SK-N-SH (cell line): ENCODE measurements at regions of chr3 and their contacts with region 1.

Region 1: GRCh38 chr3:151227807-151228665 is 25.0 kb upstream of the GPR171 start:
- DNase-seq: peak; percentile 70
- H3K4me3 ChIP-seq: no peak overlapping the region; a peak in 1 of 4 replicates
- H3K27ac ChIP-seq: peak overlapping the region in 1 of 2 experiments; percentile 33; a peak in 1 of 4 replicates
- H3K4me1 ChIP-seq: peaks cover 0 to 3% of the 10 kb centered on the region in 2 experiments; a peak in 2 of 4 replicates
- H3K27me3 ChIP-seq: no peaks in the 10 kb centered on the region
- CTCF ChIP-seq: peak; percentile 96
- EP300 ChIP-seq: no peak
- RAD21 ChIP-seq: peak; percentile 93

Region 2: GRCh38 chr3:151168269-151169094 is 59.6 kb before region 1 on chr3:
- CTCF ChIA-PET with region 1: interaction called, 32 read pairs
- POLR2A ChIA-PET with region 1: no interaction called
- DNase-seq: peak; percentile 62
- H3K4me3 ChIP-seq: no peak overlapping the region
- H3K27ac ChIP-seq: no peak overlapping the region
- H3K4me1 ChIP-seq: no peaks in the 10 kb centered on the region; a peak in 1 of 4 replicates
- H3K27me3 ChIP-seq: 0 out of 2 replicates have a peak, but pooled peaks cover 5% of the 10 kb centered on the region
- CTCF ChIP-seq: peak; percentile 90
- EP300 ChIP-seq: no peak
- RAD21 ChIP-seq: peak; percentile 90

Region 3: DNA sequence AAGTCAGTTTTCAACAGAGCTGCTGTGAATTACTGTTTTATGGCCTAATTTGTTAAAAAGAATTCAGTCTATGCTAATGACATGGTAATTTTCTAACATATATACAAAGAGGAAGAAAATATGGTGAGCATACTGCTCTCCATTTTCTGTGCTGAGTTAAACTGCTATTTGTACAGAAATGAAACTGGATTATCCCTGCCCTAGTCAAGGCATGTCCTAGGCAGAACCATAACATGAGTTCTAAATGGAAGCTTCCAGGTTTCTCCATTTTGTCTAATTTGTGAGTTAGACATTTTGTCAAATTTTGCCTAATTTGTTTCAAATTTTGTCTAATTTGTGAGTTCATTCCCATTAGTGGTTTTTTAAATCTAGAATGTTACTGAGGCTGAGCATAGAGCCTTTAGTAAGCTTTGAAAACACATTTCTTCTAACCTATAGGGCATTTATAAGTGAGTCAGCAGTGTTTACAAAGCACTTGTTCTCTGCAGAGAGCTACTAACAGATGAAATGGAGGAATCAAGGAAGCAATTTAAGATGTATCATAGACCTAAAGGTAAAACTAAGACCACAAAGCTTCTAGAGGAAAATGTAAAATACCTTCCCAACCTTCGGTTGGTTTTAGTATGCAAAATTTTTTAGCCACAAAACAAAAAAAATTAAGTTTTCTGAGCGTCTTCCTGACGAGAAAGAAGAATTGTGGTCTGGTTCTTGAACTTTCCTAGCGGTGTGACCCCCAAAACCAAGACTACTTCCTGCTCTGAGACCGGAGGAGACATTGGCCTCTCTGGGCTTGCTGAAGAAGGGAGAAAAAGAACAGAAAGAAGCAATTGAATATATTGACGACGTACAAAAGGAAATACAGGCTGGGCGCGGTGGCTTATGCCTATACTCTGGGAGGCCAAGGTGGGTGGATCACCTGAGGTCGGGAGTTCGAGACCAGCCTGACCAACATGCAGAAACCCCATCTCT is 40.5 kb after region 1 on chr3:
- CTCF ChIA-PET with region 1: interaction called, 15 read pairs
- POLR2A ChIA-PET with region 1: no interaction called
- DNase-seq: no peak
- H3K4me3 ChIP-seq: no peak overlapping the region
- H3K27ac ChIP-seq: no peak overlapping the region
- H3K4me1 ChIP-seq: no peaks in the 10 kb centered on the region; a peak in 1 of 4 replicates
- H3K27me3 ChIP-seq: no peaks in the 10 kb centered on the region; the same call in 1 of the 2 replicates
- CTCF ChIP-seq: no peak
- EP300 ChIP-seq: no peak
- RAD21 ChIP-seq: no peak

Region 4: DNA sequence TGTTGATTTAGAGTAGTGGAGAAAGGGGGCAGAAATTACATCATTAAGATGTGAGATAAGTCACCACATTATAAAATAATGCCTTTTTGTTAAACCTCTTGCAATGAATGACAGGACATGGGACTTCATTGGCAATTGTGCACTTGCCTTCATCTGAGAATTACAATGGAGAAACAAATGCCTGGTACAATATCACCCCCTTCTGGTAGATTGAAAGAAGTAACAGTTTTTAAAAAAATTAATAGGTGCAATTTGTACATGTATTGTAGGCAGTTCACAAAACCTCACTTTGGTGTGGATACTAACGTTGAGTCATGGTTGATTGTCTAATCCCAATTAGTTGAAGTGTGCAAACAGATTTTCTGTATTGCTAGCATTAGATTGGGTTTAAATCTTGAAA is 54.9 kb after region 1 on chr3:
- CTCF ChIA-PET with region 1: interaction called, 63 read pairs
- POLR2A ChIA-PET with region 1: no interaction called
- DNase-seq: peak; percentile 50
- H3K4me3 ChIP-seq: no peak overlapping the region; a peak in 1 of 4 replicates
- H3K27ac ChIP-seq: no peak overlapping the region
- H3K4me1 ChIP-seq: peaks cover 0 to 2% of the 10 kb centered on the region in 2 experiments; a peak in 1 of 4 replicates
- H3K27me3 ChIP-seq: no peaks in the 10 kb centered on the region
- CTCF ChIP-seq: peak; percentile 76
- EP300 ChIP-seq: no peak
- RAD21 ChIP-seq: peak; percentile 89

Region 5: DNA sequence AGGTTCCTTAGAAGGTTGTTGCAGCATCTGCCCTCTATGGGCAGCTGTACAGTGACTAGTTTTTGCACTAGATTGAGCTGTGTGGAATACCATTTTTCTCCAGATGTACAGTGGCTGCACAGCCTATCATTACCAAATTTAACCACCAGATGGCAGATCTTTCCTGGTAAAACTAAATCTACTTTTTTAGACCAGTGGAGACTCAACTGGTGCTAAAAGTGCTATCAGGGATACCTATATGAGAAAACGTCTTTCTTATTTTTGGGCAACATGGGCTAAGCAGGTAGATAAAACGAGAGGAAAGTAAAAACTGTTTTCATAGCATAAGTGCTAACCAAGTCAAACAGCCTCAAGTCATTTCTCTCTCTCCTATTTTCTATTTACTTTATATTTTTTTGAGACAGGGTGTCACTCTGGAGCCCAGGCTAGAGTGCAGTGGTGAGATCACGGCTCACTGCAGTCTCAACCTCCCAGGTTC is 211.7 kb after region 1 on chr3:
- CTCF ChIA-PET with region 1: interaction called, 11 read pairs
- POLR2A ChIA-PET with region 1: no interaction called
- DNase-seq: peak; percentile 50
- H3K4me3 ChIP-seq: no peak overlapping the region; a peak in 1 of 4 replicates
- H3K27ac ChIP-seq: no peak overlapping the region
- H3K4me1 ChIP-seq: peaks cover 0 to 3% of the 10 kb centered on the region in 2 experiments; a peak in 1 of 4 replicates
- H3K27me3 ChIP-seq: no peaks in the 10 kb centered on the region
- CTCF ChIP-seq: peak; percentile 87
- EP300 ChIP-seq: no peak
- RAD21 ChIP-seq: peak; percentile 85

Region 6: GRCh38 chr3:151845506-151845905 is 617.5 kb after region 1 on chr3:
- CTCF ChIA-PET with region 1: no interaction called
- POLR2A ChIA-PET with region 1: no interaction called
- DNase-seq: no peak
- H3K4me3 ChIP-seq: no peak overlapping the region
- H3K27ac ChIP-seq: peak overlapping the region in 1 of 2 experiments; percentile 17; a peak in 1 of 4 replicates
- H3K4me1 ChIP-seq: no peaks in the 10 kb centered on the region; a peak in 1 of 4 replicates
- H3K27me3 ChIP-seq: no peaks in the 10 kb centered on the region
- CTCF ChIP-seq: no peak
- EP300 ChIP-seq: no peak
- RAD21 ChIP-seq: no peak